Activated CD4-positive, alpha-beta memory T cell treated with anti-CD3 and anti-CD28 coated beads for 36 hours (primary cell): ENCODE measurements at regions of chr4 and their contacts with region 1.

Region 1: GRCh38 chr4:56048702-56049431 is 100.1 kb downstream of the CEP135 start:
- DNase-seq: peak; percentile 66
- H3K4me3 Mint-ChIP-seq: peak overlapping the region; percentile 52
- H3K27ac Mint-ChIP-seq: no peak overlapping the region
- H3K4me1 Mint-ChIP-seq: peaks cover 12% of the 10 kb centered on the region
- H3K27me3 Mint-ChIP-seq: peaks cover 46% of the 10 kb centered on the region

Region 2: DNA sequence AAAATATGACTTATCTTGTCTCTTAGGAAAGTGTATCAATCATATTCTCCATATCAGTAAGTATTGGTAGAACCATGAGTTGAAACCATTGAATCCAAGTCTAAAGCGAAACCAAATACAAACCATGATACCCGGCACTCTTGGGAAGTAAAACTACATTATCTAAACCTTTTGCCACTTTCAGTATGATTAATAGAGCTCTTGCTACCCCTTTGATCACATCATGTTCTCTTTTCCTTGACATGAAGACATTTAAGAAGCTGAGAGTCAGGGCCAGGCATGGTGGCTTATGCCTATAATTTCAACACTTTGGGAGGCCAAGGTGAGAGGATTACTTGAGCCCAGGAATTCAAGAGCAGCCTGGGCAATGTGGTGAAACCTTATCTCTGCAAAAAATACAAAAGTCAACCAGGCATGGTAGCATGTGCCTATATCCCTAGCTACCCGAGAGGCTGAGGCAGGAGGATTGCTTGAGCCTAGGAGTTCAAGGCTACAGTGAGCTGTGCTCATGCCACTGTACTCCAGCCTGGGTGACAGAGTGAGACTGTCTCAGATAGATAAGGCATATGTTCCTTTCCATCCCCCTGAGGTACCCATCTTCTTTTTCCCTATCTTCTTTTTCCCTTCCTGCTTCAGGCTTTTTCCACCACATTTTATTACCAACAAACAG is 54.7 kb before region 1 on chr4:
- CTCF ChIA-PET with region 1: no interaction called
- POLR2A ChIA-PET with region 1: no interaction called
- intact Hi-C with region 1: loop called (anchors 5 kb)
- DNase-seq: peak; percentile 20
- H3K4me3 Mint-ChIP-seq: no peak overlapping the region
- H3K27ac Mint-ChIP-seq: no peak overlapping the region
- H3K4me1 Mint-ChIP-seq: peaks cover 28% of the 10 kb centered on the region
- H3K27me3 Mint-ChIP-seq: no peaks in the 10 kb centered on the region